Natural killer cell (primary cell): ENCODE measurements at regions of chr1 and their contacts with region 1.

Region 1: GRCh38 chr1:202199265-202199889 is 5.8 kb downstream of the LGR6 start:
- DNase-seq: no peak
- ATAC-seq: no peak
- H3K4me3 ChIP-seq: no peak overlapping the region
- H3K4me3 Mint-ChIP-seq: peak overlapping the region; percentile 49
- H3K27ac ChIP-seq: peak overlapping the region; percentile 79
- H3K27ac Mint-ChIP-seq: no peak overlapping the region
- H3K4me1 ChIP-seq: peaks cover 94% of the 10 kb centered on the region
- H3K4me1 Mint-ChIP-seq: peaks cover 59 to 87% of the 10 kb centered on the region in 2 donors
- H3K27me3 ChIP-seq: peaks cover under 1% of the 10 kb centered on the region
- H3K27me3 Mint-ChIP-seq: peaks cover 0 to 9% of the 10 kb centered on the region in 2 donors
- CTCF ChIP-seq: no peak

Region 2: GRCh38 chr1:202046227-202046801 is 153.1 kb before region 1 on chr1:
- intact Hi-C with region 1: no loop called
- DNase-seq: no peak
- ATAC-seq: no peak
- H3K4me3 ChIP-seq: no peak overlapping the region
- H3K4me3 Mint-ChIP-seq: no peak overlapping the region
- H3K27ac ChIP-seq: no peak overlapping the region
- H3K27ac Mint-ChIP-seq: no peak overlapping the region
- H3K4me1 ChIP-seq: no peaks in the 10 kb centered on the region
- H3K4me1 Mint-ChIP-seq: no peaks in the 10 kb centered on the region
- H3K27me3 ChIP-seq: no peaks in the 10 kb centered on the region
- H3K27me3 Mint-ChIP-seq: peaks cover 0 to 7% of the 10 kb centered on the region in 2 donors
- CTCF ChIP-seq: no peak

Region 3: DNA sequence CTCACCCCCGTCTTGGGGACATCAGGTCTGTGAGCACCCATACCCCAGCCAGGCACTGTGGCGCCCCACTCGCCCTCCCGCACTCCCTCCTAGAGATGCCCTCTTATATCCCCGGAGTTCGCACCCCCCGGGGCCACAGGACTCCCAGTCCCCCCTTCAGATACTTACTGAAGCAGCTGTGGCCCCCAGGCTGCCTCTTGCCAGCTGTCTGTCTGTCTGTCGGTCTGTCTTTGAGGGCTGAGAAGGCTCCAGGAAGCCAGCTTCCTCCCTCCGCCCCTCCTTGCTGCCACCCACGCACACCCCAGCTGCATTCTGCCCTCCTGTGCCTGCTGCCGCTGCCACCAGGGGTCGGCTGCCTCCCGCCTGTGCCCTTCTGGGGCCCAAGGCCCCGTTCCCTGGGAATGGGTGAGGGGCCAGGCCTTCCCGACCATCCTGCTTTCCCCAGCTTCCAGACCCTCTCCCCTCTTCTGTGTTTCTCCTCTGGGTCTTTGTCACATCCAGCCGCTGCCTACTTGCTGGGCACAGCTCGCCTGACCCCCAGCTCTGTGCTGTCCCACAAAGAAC is 38.9 kb before region 1 on chr1 and contains the start of gene PTPN7:
- intact Hi-C with region 1: loop called (anchors 5 kb)
- DNase-seq: peak; percentile 71 to 89
- ATAC-seq: peak; percentile 68 to 85 (median 72)
- H3K4me3 ChIP-seq: peak within 1 kb of the TSS; percentile 66
- H3K4me3 Mint-ChIP-seq: peak within 1 kb of the TSS; percentile 98
- H3K27ac ChIP-seq: peak within 1 kb of the TSS; percentile 94
- H3K27ac Mint-ChIP-seq: peak within 1 kb of the TSS; percentile 95 to 100
- H3K4me1 ChIP-seq: peaks cover 93% of the 10 kb centered on the region
- H3K4me1 Mint-ChIP-seq: peaks cover 66 to 76% of the 10 kb centered on the region in 2 donors
- H3K27me3 ChIP-seq: no peaks in the 10 kb centered on the region
- H3K27me3 Mint-ChIP-seq: no peaks in the 10 kb centered on the region
- CTCF ChIP-seq: peak; percentile 59
- total RNA-seq, gene PTPN7: 144 to 241 (median 196) TPM

Region 4: GRCh38 chr1:202291961-202292712 is 92.8 kb after region 1 on chr1:
- intact Hi-C with region 1: loop called (anchors 2 kb)
- DNase-seq: no peak
- ATAC-seq: no peak
- H3K4me3 ChIP-seq: no peak overlapping the region
- H3K4me3 Mint-ChIP-seq: no peak overlapping the region
- H3K27ac ChIP-seq: no peak overlapping the region
- H3K27ac Mint-ChIP-seq: peak overlapping the region; percentile 64 to 91
- H3K4me1 ChIP-seq: peaks cover 16% of the 10 kb centered on the region
- H3K4me1 Mint-ChIP-seq: peaks cover 21 to 22% of the 10 kb centered on the region in 2 donors
- H3K27me3 ChIP-seq: no peaks in the 10 kb centered on the region
- H3K27me3 Mint-ChIP-seq: no peaks in the 10 kb centered on the region
- CTCF ChIP-seq: no peak